Upper lobe of right lung (tissue), 1 donor: ENCODE measurements at regions of chr6 and their contacts with region 1.

Region 1: DNA sequence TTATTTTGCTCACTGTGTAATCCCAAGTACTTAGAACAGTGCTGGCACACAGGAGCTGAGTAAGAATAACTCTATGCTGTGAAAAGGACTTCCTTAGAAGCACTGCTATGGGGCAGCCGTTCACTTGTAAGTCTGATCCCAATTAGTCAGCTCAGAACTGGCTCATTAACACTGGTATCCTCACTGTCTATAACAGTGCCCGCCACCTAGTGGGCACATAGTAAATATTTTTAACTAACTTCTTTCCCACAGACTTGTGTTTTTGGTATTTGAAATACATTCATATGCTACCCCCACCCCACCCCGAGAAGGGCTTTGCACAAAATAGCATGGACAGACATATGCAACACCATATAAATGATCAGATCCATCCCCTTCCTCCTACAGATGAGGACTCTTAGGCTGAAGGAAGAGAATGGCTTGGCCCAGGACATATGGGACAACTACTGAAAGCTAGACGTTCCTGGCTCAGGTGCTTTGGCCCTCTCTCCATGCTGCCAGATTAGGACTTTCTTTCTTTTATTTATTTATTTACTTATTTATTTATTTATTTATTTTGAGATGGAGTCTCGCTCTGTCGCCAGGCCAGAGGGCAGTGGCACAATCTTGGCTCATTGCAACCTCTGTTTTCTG is 47.1 kb downstream of the DST start:
- DNase-seq: no peak
- ATAC-seq: peak; percentile 79
- H3K4me3 ChIP-seq: no peak overlapping the region
- H3K27ac ChIP-seq: no peak overlapping the region
- H3K4me1 ChIP-seq: peaks cover 8% of the 10 kb centered on the region
- H3K27me3 ChIP-seq: no peaks in the 10 kb centered on the region
- CTCF ChIP-seq: peak; percentile 58

Region 2: GRCh38 chr6:56359201-56359899 is 236.3 kb before region 1 on chr6:
- intact Hi-C with region 1: loop called (anchors 10 kb)
- DNase-seq: no peak
- ATAC-seq: peak; percentile 98
- H3K4me3 ChIP-seq: no peak overlapping the region
- H3K27ac ChIP-seq: no peak overlapping the region
- H3K4me1 ChIP-seq: no peaks in the 10 kb centered on the region
- H3K27me3 ChIP-seq: no peaks in the 10 kb centered on the region
- CTCF ChIP-seq: peak; percentile 80

Region 3: DNA sequence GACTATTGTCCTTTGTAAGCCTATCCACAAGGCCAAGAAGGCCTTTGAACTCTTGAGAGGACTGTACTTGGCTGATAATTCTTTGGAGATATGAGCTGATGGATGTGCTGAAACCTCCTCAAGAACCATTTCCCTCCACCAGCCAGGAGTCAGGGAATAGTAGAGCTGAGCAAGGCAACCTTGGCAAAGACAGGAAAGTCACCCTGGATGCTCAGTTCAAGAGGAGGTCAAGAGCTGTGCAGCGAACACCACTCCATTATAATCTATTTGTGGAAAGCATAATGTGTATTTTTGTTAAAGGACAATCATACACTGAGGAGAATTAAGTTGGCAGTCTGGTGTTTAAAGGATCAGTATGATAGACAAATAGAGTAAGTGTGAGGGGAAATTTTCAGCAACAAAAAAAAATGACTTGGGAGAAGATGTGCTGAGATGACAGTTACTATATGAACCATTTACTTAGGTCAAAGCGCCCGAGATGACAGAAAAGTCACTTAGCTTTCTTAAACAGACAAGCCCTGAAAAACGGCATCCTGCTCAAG is 171.0 kb before region 1 on chr6:
- intact Hi-C with region 1: no loop called
- DNase-seq: no peak
- ATAC-seq: no peak
- H3K4me3 ChIP-seq: no peak overlapping the region
- H3K27ac ChIP-seq: no peak overlapping the region
- H3K4me1 ChIP-seq: no peaks in the 10 kb centered on the region
- H3K27me3 ChIP-seq: no peaks in the 10 kb centered on the region
- CTCF ChIP-seq: no peak